ENCODE measurements at regions of chr2 and their contacts with region 1.

Region 1: DNA sequence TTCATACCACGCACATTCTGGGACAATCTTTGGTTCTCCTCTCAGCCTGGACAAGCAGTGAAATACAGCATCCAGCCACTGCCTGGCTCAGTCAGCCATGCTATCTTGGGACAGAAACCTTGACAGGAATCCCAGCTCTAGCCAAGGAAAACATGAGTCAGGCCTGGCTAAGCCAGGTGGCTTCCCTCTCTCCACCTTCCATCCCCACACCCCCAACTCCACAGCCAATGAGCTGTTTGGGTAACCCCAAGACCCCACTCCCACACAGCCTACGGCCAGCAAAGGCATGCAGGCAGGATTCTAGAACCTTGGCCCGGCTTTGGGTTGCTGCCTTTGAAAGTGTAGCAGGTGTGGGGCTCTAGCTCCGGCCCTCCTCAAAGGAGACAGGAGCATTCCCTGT is 64.8 kb downstream of the MCFD2 start:
- DNase-seq: peak in 1 of 2 donors; percentile 59
- H3K4me3 ChIP-seq: no peak overlapping the region
- H3K27ac ChIP-seq: peak overlapping the region; percentile 87 to 96
- H3K4me1 ChIP-seq: peaks cover 32 to 53% of the 10 kb centered on the region in 2 donors
- H3K27me3 ChIP-seq: no peaks in the 10 kb centered on the region
- CTCF ChIP-seq: peak in 1 of 3 donors; percentile 13
- POLR2A ChIP-seq: no peak

Region 2: DNA sequence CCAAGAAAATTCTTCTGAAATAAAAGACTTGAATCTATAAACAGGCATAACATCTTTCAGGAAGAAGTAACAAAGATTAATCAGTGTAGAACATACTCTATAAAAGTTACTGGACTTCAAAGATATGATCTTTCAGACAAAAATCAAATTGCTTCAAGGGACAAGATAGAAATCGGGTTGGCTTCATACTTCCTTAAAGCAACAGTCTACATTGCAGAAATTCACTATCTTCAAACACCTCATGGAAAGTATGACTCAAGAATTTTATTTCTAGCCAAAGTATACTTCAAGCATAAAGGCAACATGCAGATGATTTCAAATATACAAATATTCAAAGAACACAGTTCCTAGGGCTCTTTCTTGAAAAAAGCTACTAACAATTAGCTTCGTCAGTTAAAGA is 1480.4 kb before region 1 on chr2:
- intact Hi-C with region 1: no loop called
- DNase-seq: no peak
- H3K4me3 ChIP-seq: no peak overlapping the region
- H3K27ac ChIP-seq: no peak overlapping the region
- H3K4me1 ChIP-seq: no peaks in the 10 kb centered on the region
- H3K27me3 ChIP-seq: no peaks in the 10 kb centered on the region
- CTCF ChIP-seq: no peak
- POLR2A ChIP-seq: no peak

Region 3: GRCh38 chr2:46666044-46666679 is 184.6 kb before region 1 on chr2:
- intact Hi-C with region 1: no loop called
- DNase-seq: no peak
- H3K4me3 ChIP-seq: no peak overlapping the region
- H3K27ac ChIP-seq: peak overlapping the region in 1 of 2 donors; percentile 49
- H3K4me1 ChIP-seq: peaks cover 2 to 12% of the 10 kb centered on the region in 2 donors
- H3K27me3 ChIP-seq: no peaks in the 10 kb centered on the region
- CTCF ChIP-seq: no peak
- POLR2A ChIP-seq: no peak

Region 4: DNA sequence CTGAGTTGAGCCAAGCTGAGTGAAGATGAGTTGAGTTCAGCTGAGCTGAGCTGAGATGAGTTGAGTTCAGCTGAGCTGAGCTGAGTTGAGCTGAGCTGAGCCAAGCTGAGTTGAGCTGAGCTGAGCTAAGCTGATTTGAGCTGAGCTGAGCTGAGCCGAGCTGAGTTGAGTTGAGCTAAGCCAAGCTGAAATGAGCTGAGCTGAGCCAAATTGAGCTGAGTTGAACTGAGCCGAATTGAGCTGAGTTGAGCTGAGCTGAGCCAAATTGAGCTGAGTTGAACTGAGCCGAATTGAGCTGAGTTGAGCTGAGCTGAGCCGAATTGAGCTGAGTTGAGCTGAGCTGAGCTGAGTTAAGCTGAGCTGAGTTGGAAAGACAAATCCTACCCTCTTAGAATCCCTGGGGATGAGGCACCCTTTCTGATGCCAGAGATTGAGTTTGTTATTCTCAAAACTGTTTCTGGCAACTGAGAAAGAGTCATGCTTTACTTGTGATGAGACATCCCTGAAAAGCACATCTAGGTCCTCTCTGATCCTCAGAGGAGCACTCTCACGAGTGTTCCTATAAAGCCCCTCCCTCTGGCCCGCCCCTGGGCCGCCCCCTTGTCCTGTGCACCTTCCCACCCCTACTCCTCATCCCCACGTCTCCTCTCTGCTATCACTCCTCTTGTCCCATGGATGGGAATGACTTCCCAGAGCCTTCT is 51.6 kb before region 1 on chr2:
- intact Hi-C with region 1: loop called (anchors 5 kb)
- DNase-seq: no peak
- H3K4me3 ChIP-seq: no peak overlapping the region
- H3K27ac ChIP-seq: no peak overlapping the region
- H3K4me1 ChIP-seq: peaks cover 4 to 5% of the 10 kb centered on the region in 2 donors
- H3K27me3 ChIP-seq: no peaks in the 10 kb centered on the region
- CTCF ChIP-seq: no peak
- POLR2A ChIP-seq: no peak

Measured in breast epithelium (tissue), 4 donors.